GM23248 (cell line): ENCODE measurements at regions of chr5 and their contacts with region 1.

Region 1: DNA sequence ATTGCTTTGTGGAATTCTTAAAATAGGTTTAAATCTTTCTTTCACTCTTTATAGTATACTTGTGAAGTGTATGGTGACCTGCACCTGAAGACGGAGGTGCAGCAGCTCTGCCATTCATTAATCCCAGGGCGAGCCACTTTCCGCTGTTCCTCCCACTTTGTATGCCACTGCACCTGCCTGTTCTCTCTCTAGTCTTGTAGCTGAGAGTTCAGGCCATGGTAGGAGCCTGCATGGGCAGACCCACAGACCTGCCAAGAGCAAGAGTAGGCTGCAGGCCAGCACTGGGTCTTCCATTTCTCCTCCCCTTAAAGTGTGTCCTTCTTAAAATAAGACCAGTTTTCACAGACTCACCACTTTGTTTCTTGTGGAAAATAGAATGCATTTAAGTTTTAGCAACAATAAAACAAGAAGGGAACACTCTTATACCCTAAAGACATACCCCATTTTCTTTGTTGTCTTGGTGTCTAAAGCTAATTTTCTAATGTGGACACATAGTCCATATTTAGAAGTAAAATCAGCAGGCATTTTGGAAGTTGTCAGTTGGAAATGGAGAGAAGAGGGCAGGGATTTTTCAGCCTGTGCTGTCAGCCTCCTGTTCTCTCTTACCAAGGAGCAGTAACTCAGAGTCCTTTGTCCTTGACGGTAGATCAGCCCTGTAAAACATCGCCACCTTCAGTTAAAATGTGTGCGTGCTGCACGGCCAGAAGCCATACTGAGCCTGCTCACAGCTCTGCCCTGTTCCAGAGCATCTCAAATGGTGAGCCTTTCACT is 103.2 kb downstream of the SNCAIP start:
- DNase-seq: peak; percentile 75
- H3K4me3 ChIP-seq: no peak overlapping the region
- H3K27ac ChIP-seq: no peak overlapping the region
- H3K4me1 ChIP-seq: 0 out of 2 replicates have a peak, but pooled peaks cover 2% of the 10 kb centered on the region
- H3K27me3 ChIP-seq: no peaks in the 10 kb centered on the region

Region 2: DNA sequence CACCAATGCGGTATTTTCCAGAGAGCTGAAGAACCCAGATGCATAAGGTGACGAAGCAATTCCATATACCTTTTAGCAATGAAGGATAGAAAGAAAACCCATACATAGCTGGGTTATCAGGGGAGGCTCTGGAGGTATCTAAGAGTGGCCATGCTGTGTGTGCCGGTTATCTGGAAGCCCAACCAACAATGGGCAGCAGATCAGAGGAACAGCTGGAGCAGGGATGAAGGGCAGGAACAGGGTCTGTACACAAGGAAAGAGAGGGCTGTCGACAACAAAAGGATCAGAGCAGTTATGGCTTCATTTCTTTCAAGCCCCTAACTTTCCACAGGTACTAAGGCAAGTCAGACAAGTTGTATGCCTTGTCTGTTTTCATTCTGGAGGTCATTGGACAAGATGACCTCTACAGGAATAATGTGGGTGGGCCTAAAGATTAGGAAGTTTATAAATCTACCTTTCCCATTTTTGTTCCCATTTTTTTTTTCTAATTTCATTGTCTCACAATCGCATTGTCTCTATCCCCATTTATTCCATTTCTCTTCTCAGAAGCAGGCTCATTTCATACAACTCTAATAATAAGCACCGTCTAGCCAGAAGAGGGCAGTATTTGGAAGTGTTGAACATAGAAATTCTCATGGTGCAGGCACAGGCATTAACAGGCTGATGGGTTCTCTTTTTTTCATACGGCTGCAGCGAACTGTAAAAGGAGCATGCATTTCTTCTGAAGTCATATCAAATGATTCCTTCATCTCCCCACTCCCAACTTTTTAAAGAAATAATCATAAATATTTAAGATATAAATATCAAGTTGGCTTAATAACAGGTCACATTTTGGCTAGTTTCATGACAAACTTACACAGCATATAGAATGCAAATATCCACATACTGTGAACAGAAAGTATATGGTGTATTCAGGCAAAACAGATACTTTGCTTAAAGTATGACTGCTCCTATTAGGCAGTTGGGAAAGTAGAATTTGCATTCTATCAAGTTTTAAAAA is 222.4 kb before region 1 on chr5:
- in situ Hi-C with region 1: loop called (anchors 10 kb)
- DNase-seq: peak; percentile 81
- H3K4me3 ChIP-seq: no peak overlapping the region
- H3K27ac ChIP-seq: no peak overlapping the region
- H3K4me1 ChIP-seq: no peaks in the 10 kb centered on the region
- H3K27me3 ChIP-seq: no peaks in the 10 kb centered on the region